GM12878 (cell line): ENCODE measurements at regions of chr6 and their contacts with region 1.

Region 1: DNA sequence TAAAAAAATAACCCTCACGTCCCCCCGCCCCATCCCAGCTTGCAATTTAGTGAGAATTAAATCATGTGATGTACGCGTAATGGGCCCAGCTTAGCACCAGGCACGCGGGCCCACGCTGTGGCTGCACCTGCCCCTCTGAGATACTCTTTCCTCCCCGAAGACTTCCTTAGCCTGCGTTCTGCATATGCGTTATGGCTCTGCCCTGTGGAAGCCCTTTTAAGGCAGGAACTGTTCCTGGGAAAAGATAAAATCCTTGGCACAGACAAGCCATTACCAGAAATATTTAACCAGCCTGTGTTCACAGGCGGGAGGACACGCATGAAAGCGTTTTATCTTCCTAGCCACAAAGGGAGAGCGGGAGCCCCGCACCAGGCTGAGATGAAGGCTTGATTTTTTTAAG is 311.0 kb downstream of the LRFN2 start:
- DNase-seq: no peak
- ATAC-seq: no peak
- H3K4me3 ChIP-seq: no peak overlapping the region
- H3K27ac ChIP-seq: no peak overlapping the region
- H3K4me1 ChIP-seq: no peaks in the 10 kb centered on the region
- H3K27me3 ChIP-seq: peaks cover 0 to 2% of the 10 kb centered on the region in 2 experiments; a peak in 1 of 4 replicates
- CTCF ChIP-seq: no peak
- EP300 ChIP-seq: no peak
- POLR2A ChIP-seq: no peak
- RAD21 ChIP-seq: no peak

Region 2: GRCh38 chr6:40258531-40258930 is 17.6 kb before region 1 on chr6:
- CTCF ChIA-PET with region 1: interaction called, 3 read pairs
- POLR2A ChIA-PET with region 1: interaction called, 3 read pairs
- RAD21 ChIA-PET with region 1: interaction called, 10 read pairs
- SMC1A ChIA-PET with region 1: interaction called, 10 read pairs
- in situ Hi-C with region 1: no loop called
- intact Hi-C with region 1: no loop called
- DNase-seq: no peak
- ATAC-seq: no peak
- H3K4me3 ChIP-seq: no peak overlapping the region
- H3K27ac ChIP-seq: no peak overlapping the region
- H3K4me1 ChIP-seq: no peaks in the 10 kb centered on the region
- H3K27me3 ChIP-seq: no peaks in the 10 kb centered on the region; a peak in 1 of 4 replicates
- CTCF ChIP-seq: no peak
- EP300 ChIP-seq: no peak
- POLR2A ChIP-seq: no peak
- RAD21 ChIP-seq: no peak